ENCODE measurements at regions of chr3 and their contacts with region 1.

Region 1: DNA sequence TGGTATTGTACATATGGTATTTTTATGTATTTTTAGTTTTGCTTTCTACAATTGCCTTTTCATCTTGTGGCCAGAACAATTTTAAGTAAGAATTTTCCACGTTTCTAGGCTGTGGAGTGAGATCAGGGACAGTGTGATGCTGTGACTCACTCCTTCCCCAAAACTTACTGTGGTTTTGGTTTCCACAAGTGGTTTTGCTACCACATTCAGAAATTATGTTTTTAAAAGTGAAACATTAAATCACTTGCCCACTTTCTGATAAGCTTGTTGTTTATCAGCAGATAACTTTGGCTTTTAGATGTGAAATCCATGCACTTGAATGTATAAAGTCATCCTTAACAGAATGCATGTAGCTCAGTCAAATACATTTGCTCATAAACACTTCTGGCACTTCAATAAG is 192.2 kb upstream of the THRB start:
- DNase-seq: no peak
- ATAC-seq: no peak
- H3K4me3 ChIP-seq: no peak overlapping the region
- H3K27ac ChIP-seq: no peak overlapping the region
- H3K4me1 ChIP-seq: peaks cover 0 to 7% (median 0%) of the 10 kb centered on the region in 9 donors
- H3K27me3 ChIP-seq: no peaks in the 10 kb centered on the region
- CTCF ChIP-seq: no peak

Region 2: DNA sequence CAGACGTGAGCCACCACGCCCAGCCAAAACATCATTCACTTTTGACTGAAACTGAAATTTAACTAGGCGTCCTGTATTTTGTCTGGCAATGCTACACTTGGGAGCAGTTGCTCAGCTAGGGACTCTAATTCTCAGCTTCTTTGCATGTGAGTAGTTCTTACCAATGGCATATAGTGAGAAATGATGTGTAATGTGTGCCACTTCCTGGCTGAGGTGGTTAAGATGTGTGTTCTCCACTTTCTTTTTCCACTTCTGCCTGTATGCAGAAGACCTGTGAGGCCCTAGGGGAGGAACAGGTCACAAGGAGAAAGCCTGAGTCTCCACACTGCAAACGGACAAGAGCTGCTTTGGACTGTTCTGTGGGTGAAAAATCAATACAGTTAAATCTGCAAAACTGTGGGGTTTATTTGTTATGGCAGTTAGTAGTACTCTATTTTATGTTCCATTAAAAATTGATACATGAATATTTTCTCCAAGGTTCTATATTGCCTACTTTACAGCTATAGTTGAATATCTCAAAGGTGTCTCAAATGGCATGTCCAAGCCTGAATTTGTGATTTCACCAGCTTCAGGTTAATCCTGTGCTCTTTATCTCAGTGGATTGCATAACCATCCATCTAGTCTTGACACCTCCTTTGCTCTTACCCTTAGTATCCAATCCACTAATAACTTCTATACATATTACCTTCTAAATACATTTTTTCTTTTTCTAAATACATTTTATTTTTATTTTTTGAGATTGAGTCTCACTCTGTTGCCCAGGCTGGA is 682.5 kb before region 1 on chr3:
- intact Hi-C with region 1: loop called (anchors 2 to 10 kb)
- DNase-seq: no peak
- ATAC-seq: no peak
- H3K4me3 ChIP-seq: no peak overlapping the region
- H3K27ac ChIP-seq: no peak overlapping the region
- H3K4me1 ChIP-seq: peaks cover 0 to 3% (median 0%) of the 10 kb centered on the region in 9 donors
- H3K27me3 ChIP-seq: no peaks in the 10 kb centered on the region
- CTCF ChIP-seq: no peak